ENCODE measurements at regions of chr15 and their contacts with region 1.

Region 1: DNA sequence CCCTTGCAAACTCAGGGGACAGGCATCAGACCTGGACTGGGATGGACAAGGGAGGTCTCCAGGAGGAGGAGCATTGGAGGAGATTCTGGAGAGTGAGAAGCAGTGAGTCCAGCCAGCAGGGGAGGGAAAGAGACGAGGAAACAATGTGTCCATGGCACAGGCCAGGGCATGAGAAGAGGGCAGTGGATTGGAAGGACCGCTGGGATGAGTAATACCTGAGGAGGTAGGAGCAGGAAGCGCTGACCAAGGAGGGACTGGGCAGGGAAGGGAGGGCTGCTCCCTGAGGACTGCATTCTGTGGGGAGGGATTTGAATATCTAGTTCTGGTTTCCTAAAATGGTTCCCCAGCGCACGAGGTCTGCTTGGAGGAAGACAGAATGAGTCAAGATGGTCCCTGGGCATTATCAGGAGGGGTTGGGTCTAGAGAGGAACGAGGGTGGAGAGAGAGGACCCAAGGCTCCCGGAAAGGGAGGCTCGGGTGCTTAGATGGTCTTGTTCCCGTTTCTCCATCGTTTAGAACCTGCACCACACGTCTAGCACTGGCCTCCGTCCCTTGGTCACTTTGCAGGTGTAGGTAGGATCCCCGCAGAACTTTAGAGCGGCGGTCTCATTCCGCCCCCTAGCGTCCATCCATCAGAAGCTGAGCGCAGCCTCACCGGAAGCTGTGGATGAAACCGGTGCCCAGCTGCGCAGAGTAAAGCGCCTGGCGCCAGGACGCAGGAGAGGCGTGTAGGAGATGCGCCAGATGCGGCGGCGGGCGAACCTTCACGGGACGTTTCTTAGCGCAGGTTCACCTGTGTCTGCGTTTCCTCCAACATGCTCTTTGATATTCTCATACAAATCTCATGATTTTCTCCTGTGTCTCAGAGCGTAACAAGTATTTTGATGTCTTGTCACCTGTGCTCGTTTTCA is 190.7 kb upstream of the NDN start:
- DNase-seq: peak; percentile 57 to 62
- H3K4me3 ChIP-seq: no peak overlapping the region
- H3K27ac ChIP-seq: no peak overlapping the region
- H3K4me1 ChIP-seq: no peaks in the 10 kb centered on the region
- H3K27me3 ChIP-seq: no peaks in the 10 kb centered on the region
- CTCF ChIP-seq: peak in 4 of 6 experiments; percentile 21 to 63 (median 51)
- POLR2A ChIP-seq: no peak

Region 2: GRCh38 chr15:23629234-23629805 is 248.4 kb before region 1 on chr15:
- intact Hi-C with region 1: no loop called
- DNase-seq: no peak
- H3K4me3 ChIP-seq: no peak overlapping the region
- H3K27ac ChIP-seq: no peak overlapping the region
- H3K4me1 ChIP-seq: no peaks in the 10 kb centered on the region
- H3K27me3 ChIP-seq: no peaks in the 10 kb centered on the region
- CTCF ChIP-seq: peak in 3 of 6 experiments; percentile 11 to 48 (median 43)
- POLR2A ChIP-seq: no peak

Region 3: DNA sequence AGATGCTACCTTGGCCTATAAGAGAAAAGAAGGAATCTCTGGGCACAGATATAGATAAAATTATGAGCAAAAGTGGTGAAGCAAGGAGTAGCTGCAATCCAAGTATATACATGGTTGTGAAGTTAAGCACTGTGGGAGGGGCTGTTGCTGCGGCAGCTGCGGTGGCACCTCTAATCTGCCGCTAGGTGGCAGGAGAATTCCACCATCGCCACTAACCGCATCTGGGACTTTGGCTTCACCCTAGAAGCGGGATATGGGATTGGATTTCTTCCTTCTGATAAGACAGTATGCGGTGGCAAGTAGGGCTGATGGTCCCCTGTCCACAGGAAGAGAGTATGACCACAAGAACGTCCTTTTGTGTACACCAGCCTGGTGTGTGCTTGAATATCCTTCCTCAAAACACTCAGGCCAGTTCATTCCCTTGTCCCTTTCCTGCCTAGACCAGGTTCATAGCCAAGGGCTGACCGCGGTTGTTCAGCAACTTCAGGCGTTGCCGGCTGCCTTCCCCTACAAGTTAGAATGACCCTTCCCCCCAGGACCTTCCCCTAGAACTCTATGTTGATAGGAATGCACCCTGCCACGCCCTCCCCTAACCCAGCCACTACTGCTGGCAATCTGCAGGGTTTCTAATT is 235.2 kb before region 1 on chr15:
- intact Hi-C with region 1: loop called (anchors 10 kb)
- DNase-seq: peak; percentile 43 to 61
- H3K4me3 ChIP-seq: no peak overlapping the region
- H3K27ac ChIP-seq: no peak overlapping the region
- H3K4me1 ChIP-seq: no peaks in the 10 kb centered on the region
- H3K27me3 ChIP-seq: no peaks in the 10 kb centered on the region
- CTCF ChIP-seq: peak; percentile 40 to 86 (median 72)
- POLR2A ChIP-seq: no peak